ENCODE measurements at regions of chr11 and their contacts with region 1.

Region 1: DNA sequence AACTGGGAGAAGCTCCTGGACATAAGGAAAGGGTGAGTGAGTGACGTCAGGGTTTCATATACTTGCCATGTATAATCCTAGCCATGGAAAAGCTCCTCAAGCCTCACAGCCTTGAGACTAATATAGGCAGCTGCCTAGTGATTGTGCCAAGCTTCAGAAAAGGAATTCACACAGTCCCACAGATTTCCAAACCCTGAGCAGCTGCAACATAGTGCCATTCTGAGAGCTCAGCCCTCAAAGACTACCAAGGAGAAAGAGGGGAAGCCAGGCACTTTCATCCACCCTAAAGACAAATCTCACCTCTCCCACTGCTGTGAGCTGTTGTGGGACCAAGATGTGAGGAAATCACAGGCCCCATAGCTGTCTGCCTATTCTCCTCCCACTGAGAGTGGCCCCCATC is 707.9 kb upstream of the ANO5 start:
- DNase-seq: no peak
- H3K4me3 ChIP-seq: no peak overlapping the region
- H3K4me3 Mint-ChIP-seq: no peak overlapping the region
- H3K27ac Mint-ChIP-seq: no peak overlapping the region
- H3K4me1 ChIP-seq: no peaks in the 10 kb centered on the region
- H3K4me1 Mint-ChIP-seq: no peaks in the 10 kb centered on the region
- H3K27me3 ChIP-seq: no peaks in the 10 kb centered on the region
- H3K27me3 Mint-ChIP-seq: no peaks in the 10 kb centered on the region
- CTCF ChIP-seq: no peak

Region 2: DNA sequence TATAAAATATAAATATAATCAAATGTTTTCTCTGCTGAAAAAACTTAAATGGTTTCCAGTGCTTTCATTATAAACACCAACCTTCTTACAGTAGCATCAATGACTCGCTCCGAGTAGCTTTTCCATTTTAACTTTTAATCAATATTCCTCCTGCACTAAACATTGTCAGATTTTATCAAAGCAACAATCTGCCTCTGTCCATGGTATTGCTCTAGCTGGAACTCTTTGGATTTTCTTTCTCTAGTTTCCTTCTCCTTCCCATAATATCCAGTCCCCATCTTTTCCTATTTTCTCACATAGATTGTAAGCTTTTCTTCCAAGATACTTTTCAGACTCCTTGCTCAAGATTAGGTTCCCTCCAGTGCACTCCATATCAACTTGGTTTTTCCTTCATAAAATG is 99.3 kb before region 1 on chr11:
- CTCF ChIA-PET with region 1: no interaction called
- POLR2A ChIA-PET with region 1: interaction called, 16 read pairs
- intact Hi-C with region 1: no loop called
- DNase-seq: no peak
- H3K4me3 ChIP-seq: no peak overlapping the region
- H3K4me3 Mint-ChIP-seq: no peak overlapping the region
- H3K27ac Mint-ChIP-seq: no peak overlapping the region
- H3K4me1 ChIP-seq: no peaks in the 10 kb centered on the region
- H3K4me1 Mint-ChIP-seq: no peaks in the 10 kb centered on the region
- H3K27me3 ChIP-seq: no peaks in the 10 kb centered on the region
- H3K27me3 Mint-ChIP-seq: peaks cover 2% of the 10 kb centered on the region
- CTCF ChIP-seq: no peak

Region 3: GRCh38 chr11:21446939-21447590 is 37.9 kb before region 1 on chr11:
- CTCF ChIA-PET with region 1: no interaction called
- POLR2A ChIA-PET with region 1: no interaction called
- intact Hi-C with region 1: no loop called
- DNase-seq: no peak
- H3K4me3 ChIP-seq: no peak overlapping the region
- H3K4me3 Mint-ChIP-seq: no peak overlapping the region
- H3K27ac Mint-ChIP-seq: no peak overlapping the region
- H3K4me1 ChIP-seq: no peaks in the 10 kb centered on the region
- H3K4me1 Mint-ChIP-seq: no peaks in the 10 kb centered on the region
- H3K27me3 ChIP-seq: no peaks in the 10 kb centered on the region
- H3K27me3 Mint-ChIP-seq: no peaks in the 10 kb centered on the region
- CTCF ChIP-seq: no peak

Region 4: DNA sequence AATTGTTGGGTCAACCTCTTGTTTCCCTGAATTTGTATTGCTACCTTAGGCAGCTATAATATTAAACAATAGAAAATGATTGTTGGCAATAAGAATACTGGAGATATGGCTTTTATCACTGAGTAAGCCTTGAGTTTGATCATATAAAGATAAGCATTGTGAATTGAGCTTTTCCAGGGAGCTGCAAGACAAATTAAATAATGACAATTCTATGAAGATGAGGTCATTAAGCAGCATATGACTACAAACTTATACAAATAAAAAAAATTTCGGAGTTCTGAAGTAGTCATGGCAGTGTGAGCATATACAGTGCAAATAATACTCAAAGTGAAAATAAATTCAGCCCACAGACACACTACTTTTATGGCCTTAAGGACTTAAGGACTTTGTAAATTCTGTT is 546.8 kb after region 1 on chr11:
- CTCF ChIA-PET with region 1: no interaction called
- POLR2A ChIA-PET with region 1: no interaction called
- intact Hi-C with region 1: no loop called
- DNase-seq: no peak
- H3K4me3 ChIP-seq: no peak overlapping the region
- H3K4me3 Mint-ChIP-seq: no peak overlapping the region
- H3K27ac Mint-ChIP-seq: no peak overlapping the region
- H3K4me1 ChIP-seq: no peaks in the 10 kb centered on the region
- H3K4me1 Mint-ChIP-seq: no peaks in the 10 kb centered on the region
- H3K27me3 ChIP-seq: no peaks in the 10 kb centered on the region
- H3K27me3 Mint-ChIP-seq: peaks cover under 1% of the 10 kb centered on the region
- CTCF ChIP-seq: no peak

Measured in Caco-2 (cell line).